Posterior cingulate gyrus (tissue), 11 donors: ENCODE measurements at regions of chr6 and their contacts with region 1.

Region 1: DNA sequence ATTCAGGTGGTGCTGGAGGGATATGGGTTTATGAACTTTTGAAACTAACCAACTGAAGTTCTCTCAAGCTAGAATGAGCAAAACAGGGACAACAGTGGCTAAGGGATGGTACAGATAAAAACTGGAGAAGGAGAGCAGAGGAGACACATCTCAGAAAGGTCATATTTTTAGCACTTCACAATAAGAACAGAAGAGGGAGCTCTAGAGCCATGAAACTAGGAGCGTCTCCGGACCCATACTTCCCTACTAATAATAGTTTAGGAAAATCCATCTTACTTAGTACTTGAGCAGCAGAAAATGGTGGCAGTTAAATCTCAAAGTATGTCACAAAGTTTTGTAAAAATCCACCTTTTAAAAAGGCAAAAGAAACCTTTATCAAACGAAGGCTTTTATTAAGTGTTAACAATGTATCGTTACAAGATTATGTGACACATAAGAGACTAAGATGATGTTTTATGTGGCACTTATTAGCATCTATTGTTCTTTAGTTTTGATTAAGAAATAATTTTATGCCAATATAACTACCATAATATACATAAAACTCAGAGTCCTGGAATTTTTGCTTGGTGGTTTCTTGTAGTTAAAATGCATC is 278.6 kb downstream of the TBC1D32 start:
- DNase-seq: no peak

Region 2: GRCh38 chr6:120994573-120994967 is 61.1 kb before region 1 on chr6:
- intact Hi-C with region 1: no loop called
- DNase-seq: no peak

Region 3: GRCh38 chr6:121305957-121306607 is 250.4 kb after region 1 on chr6:
- intact Hi-C with region 1: loop called (anchors 5 kb)
- DNase-seq: no peak